Naive thymus-derived CD4-positive, alpha-beta T cell (primary cell): ENCODE measurements at regions of chr6 and their contacts with region 1.

Region 1: GRCh38 chr6:79078075-79079025 is at the start of gene PHIP:
- DNase-seq: peak; percentile 89 to 97 (median 94)
- ATAC-seq: peak; percentile 90
- H3K4me3 ChIP-seq: peak within 1 kb of the TSS; percentile 83
- H3K4me3 Mint-ChIP-seq: peak within 1 kb of the TSS; percentile 92 to 98 (median 94)
- H3K27ac ChIP-seq: peak within 1 kb of the TSS; percentile 98
- H3K27ac Mint-ChIP-seq: peak within 1 kb of the TSS; percentile 93 to 98 (median 95)
- H3K4me1 ChIP-seq: peaks cover 19 to 21% of the 10 kb centered on the region in 2 donors
- H3K4me1 Mint-ChIP-seq: peaks cover 19 to 46% (median 41%) of the 10 kb centered on the region in 7 donors
- H3K27me3 ChIP-seq: no peaks in the 10 kb centered on the region
- H3K27me3 Mint-ChIP-seq: peaks cover 4 to 23% (median 15%) of the 10 kb centered on the region in 5 donors
- total RNA-seq, gene PHIP: 34.0 to 46.8 (median 41.6) TPM

Region 2: DNA sequence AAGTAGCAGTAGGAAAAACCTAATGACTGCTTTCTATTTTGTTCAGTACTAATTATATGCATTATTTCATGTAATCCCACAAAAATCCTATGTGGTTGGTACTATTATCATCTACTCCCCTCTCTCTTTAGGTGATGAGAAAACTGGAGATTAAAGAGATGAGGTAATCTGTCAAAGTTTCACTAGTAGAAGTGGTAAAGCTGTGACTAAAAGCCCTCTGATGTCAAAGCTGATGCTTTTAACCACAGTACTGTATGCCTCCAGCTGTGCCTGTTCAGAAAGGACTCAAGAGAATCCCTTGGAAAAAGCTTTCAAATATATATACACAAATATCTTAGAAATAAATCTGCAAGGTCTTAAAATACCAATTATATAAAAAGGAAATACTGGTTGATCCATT is 38.3 kb before region 1 on chr6:
- CTCF ChIA-PET with region 1: interaction called, 5 read pairs
- POLR2A ChIA-PET with region 1: interaction called, 15 read pairs
- intact Hi-C with region 1: loop called (anchors 2 to 5 kb)
- DNase-seq: no peak
- ATAC-seq: no peak
- H3K4me3 ChIP-seq: no peak overlapping the region
- H3K4me3 Mint-ChIP-seq: no peak overlapping the region
- H3K27ac ChIP-seq: no peak overlapping the region
- H3K27ac Mint-ChIP-seq: no peak overlapping the region
- H3K4me1 ChIP-seq: peaks cover 3 to 11% of the 10 kb centered on the region in 2 donors
- H3K4me1 Mint-ChIP-seq: peaks cover 30 to 81% (median 64%) of the 10 kb centered on the region in 7 donors
- H3K27me3 ChIP-seq: no peaks in the 10 kb centered on the region
- H3K27me3 Mint-ChIP-seq: no peaks in the 10 kb centered on the region

Region 3: DNA sequence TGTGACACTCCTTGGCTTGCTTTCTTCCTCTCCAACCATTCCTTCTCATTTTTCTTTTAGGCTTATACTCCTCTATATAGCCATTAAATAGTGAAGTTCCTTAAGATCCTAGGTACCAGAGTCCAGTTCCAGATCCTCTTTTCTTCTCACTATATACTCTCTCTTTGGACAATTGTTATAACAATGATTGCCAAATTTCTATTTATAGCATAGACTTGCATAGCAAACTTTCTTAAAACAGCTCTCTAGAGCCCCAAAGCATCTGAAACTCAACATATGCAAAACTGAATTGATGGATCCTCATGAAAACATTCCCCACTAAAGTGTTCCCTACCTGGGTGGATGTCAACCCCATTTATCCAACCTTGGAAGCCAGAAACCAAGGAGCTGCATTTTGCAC is 13.7 kb before region 1 on chr6:
- CTCF ChIA-PET with region 1: no interaction called
- POLR2A ChIA-PET with region 1: interaction called, 44 read pairs
- intact Hi-C with region 1: loop called in 1 of 2 experiments (anchors 2 kb)
- DNase-seq: no peak
- ATAC-seq: no peak
- H3K4me3 ChIP-seq: no peak overlapping the region
- H3K4me3 Mint-ChIP-seq: no peak overlapping the region
- H3K27ac ChIP-seq: no peak overlapping the region
- H3K27ac Mint-ChIP-seq: no peak overlapping the region
- H3K4me1 ChIP-seq: peaks cover 0 to 14% of the 10 kb centered on the region in 2 donors
- H3K4me1 Mint-ChIP-seq: peaks cover 2 to 24% (median 19%) of the 10 kb centered on the region in 7 donors
- H3K27me3 ChIP-seq: no peaks in the 10 kb centered on the region
- H3K27me3 Mint-ChIP-seq: no peaks in the 10 kb centered on the region

Region 4: GRCh38 chr6:79127660-79128059 is 49.3 kb after region 1 on chr6:
- CTCF ChIA-PET with region 1: no interaction called
- POLR2A ChIA-PET with region 1: no interaction called
- intact Hi-C with region 1: no loop called
- DNase-seq: no peak
- ATAC-seq: no peak
- H3K4me3 ChIP-seq: no peak overlapping the region
- H3K4me3 Mint-ChIP-seq: no peak overlapping the region
- H3K27ac ChIP-seq: no peak overlapping the region
- H3K27ac Mint-ChIP-seq: no peak overlapping the region
- H3K4me1 ChIP-seq: no peaks in the 10 kb centered on the region
- H3K4me1 Mint-ChIP-seq: no peaks in the 10 kb centered on the region
- H3K27me3 ChIP-seq: no peaks in the 10 kb centered on the region
- H3K27me3 Mint-ChIP-seq: peaks cover 0 to 18% (median 14%) of the 10 kb centered on the region in 5 donors

Region 5: GRCh38 chr6:79536954-79537747 is 458.8 kb after region 1 on chr6 and contains the start of gene LCA5:
- CTCF ChIA-PET with region 1: no interaction called
- POLR2A ChIA-PET with region 1: interaction called, 6 read pairs
- intact Hi-C with region 1: loop called (anchors 1 kb)
- DNase-seq: peak; percentile 65 to 93 (median 89)
- ATAC-seq: peak; percentile 99
- H3K4me3 ChIP-seq: peak within 1 kb of the TSS; percentile 72
- H3K4me3 Mint-ChIP-seq: no peak within 1 kb of the TSS
- H3K27ac ChIP-seq: peak within 1 kb of the TSS; percentile 50
- H3K27ac Mint-ChIP-seq: no peak within 1 kb of the TSS
- H3K4me1 ChIP-seq: peaks cover 4 to 6% of the 10 kb centered on the region in 2 donors
- H3K4me1 Mint-ChIP-seq: peaks cover 0 to 7% (median 0%) of the 10 kb centered on the region in 7 donors
- H3K27me3 ChIP-seq: peaks cover 0 to 4% of the 10 kb centered on the region in 2 donors
- H3K27me3 Mint-ChIP-seq: peaks cover 0 to 20% (median 6%) of the 10 kb centered on the region in 5 donors
- total RNA-seq, gene LCA5: 0.10 to 0.65 (median 0.24) TPM